ENCODE measurements at regions of chr4 and their contacts with region 1.

Region 1: GRCh38 chr4:183471946-183472708 is 27.7 kb downstream of the CDKN2AIP start:
- DNase-seq: peak; percentile 90
- H3K4me3 Mint-ChIP-seq: no peak overlapping the region
- H3K27ac Mint-ChIP-seq: no peak overlapping the region
- H3K4me1 Mint-ChIP-seq: peaks cover 14% of the 10 kb centered on the region
- H3K27me3 Mint-ChIP-seq: no peaks in the 10 kb centered on the region
- CTCF ChIP-seq: peak; percentile 63

Region 2: DNA sequence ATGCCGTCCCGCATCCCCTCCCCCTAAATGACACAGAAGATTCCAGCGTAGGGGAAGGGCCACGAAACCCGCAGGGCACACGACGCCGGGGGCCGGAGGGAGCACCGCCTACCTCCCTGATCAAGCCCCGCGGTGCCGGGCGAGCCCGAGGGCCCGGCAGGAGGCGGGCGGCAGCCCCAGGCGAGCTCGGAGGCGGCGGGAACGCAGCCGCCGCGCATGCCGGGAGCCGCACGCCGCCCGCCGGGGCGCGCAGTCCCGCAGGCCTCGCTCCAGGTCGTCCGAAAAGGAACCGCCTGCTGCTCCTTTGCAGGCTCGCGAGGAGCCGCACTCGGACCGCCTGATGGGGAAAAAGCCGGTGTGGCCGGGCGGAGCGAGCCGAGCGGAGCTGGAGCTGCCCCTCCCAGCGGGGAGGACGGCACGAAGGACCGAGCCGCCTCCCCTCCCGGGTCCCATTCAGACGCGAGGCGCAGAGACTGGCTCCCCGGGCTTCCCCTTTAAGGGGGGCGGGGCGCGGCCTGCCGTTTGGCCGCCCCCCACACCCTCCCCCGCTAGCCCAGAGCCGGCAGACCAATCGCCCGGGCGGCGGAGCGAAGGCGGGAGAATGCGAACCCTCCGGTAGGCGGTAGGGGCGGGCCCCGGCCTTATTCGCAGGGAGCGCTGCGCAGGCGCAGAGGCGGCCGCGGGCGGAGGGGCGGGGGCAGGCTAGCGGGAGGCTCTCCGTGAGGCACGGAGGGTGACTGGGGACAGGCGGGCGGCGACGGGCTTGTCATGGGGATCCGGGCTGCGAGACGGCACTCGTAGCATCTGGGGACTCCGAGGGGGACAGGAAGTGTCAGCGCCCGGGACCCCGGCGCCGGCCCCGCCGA is 32.2 kb after region 1 on chr4:
- CTCF ChIA-PET with region 1: interaction called, 10 read pairs
- POLR2A ChIA-PET with region 1: interaction called, 6 read pairs
- intact Hi-C with region 1: loop called (anchors 1 kb)
- DNase-seq: peak; percentile 98
- H3K4me3 Mint-ChIP-seq: peak overlapping the region; percentile 85
- H3K27ac Mint-ChIP-seq: peak overlapping the region; percentile 43
- H3K4me1 Mint-ChIP-seq: peaks cover 11% of the 10 kb centered on the region
- H3K27me3 Mint-ChIP-seq: no peaks in the 10 kb centered on the region
- CTCF ChIP-seq: peak; percentile 24

Region 3: GRCh38 chr4:183645326-183645725 is 173.2 kb after region 1 on chr4:
- CTCF ChIA-PET with region 1: no interaction called
- POLR2A ChIA-PET with region 1: no interaction called
- intact Hi-C with region 1: loop called (anchors 1 kb)
- DNase-seq: no peak
- H3K4me3 Mint-ChIP-seq: no peak overlapping the region
- H3K27ac Mint-ChIP-seq: no peak overlapping the region
- H3K4me1 Mint-ChIP-seq: no peaks in the 10 kb centered on the region
- H3K27me3 Mint-ChIP-seq: no peaks in the 10 kb centered on the region
- CTCF ChIP-seq: no peak

Region 4: DNA sequence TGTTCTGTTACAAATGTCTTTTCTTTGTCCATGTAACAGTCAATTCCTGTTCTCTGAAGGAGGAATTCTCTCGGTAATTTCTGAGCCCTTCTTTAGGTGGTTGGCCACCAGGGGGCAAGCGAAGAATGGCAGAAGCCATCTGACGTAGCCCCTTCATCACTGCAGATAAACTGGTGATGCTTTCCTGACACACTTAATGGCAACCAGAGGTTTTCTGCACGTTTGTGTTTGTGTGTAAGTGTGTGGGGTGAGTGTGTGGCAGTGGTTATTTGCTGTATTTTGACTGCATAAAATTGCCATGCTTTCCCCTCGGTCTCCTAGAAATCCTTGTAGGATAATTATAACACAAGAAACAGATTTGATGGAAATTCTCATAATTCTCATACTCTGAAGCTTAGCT is 368.2 kb after region 1 on chr4:
- CTCF ChIA-PET with region 1: no interaction called
- POLR2A ChIA-PET with region 1: no interaction called
- intact Hi-C with region 1: loop called (anchors 5 kb)
- DNase-seq: peak; percentile 81
- H3K4me3 Mint-ChIP-seq: no peak overlapping the region
- H3K27ac Mint-ChIP-seq: no peak overlapping the region
- H3K4me1 Mint-ChIP-seq: no peaks in the 10 kb centered on the region
- H3K27me3 Mint-ChIP-seq: no peaks in the 10 kb centered on the region
- CTCF ChIP-seq: peak; percentile 79

Region 5: GRCh38 chr4:184168406-184169019 is 696.4 kb after region 1 on chr4:
- CTCF ChIA-PET with region 1: interaction called, 7 read pairs
- POLR2A ChIA-PET with region 1: no interaction called
- intact Hi-C with region 1: loop called (anchors 1 kb)
- DNase-seq: peak; percentile 61
- H3K4me3 Mint-ChIP-seq: no peak overlapping the region
- H3K27ac Mint-ChIP-seq: no peak overlapping the region
- H3K4me1 Mint-ChIP-seq: no peaks in the 10 kb centered on the region
- H3K27me3 Mint-ChIP-seq: no peaks in the 10 kb centered on the region
- CTCF ChIP-seq: peak; percentile 95

Measured in MCF 10A (cell line).